ENCODE measurements at regions of chr11 and their contacts with region 1.

Region 1: DNA sequence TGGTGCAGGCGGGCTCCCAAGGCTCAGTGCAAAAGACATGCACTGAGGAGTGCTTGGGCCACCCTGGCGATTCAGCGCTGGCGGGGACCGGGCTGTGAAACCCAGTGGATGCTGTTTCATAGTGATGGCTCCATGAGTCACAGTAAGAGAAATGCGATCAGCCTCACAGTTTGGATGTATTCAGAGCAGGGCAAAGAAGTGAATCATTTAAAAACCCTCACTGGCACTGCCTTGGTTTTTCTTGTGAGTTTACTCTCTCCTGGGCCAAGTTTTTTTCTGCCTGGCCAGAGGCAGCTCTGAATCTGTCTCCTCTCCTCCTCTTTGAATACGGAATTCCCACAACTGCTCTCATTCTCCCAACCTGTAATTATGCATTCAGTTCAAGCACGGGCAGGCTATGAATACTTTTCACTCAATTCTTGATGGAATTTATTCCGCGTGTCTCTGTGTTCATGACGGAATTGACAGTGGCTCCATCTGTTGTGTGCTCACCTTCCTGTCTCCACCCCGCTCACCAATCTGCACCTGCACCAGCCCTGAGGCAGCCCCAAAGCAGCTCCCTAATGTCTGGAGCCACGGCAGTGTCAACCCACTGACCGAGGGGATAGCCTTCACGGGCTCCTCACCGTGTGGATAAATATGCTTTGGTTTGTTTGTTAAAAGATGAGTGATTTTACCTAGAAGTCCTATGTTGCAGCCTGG is 14.9 kb downstream of the ADAMTS8 start:
- DNase-seq: peak; percentile 94
- H3K4me3 ChIP-seq: no peak overlapping the region
- H3K27ac ChIP-seq: peak overlapping the region; percentile 57
- H3K4me1 ChIP-seq: peaks cover 20% of the 10 kb centered on the region
- H3K27me3 ChIP-seq: no peaks in the 10 kb centered on the region
- CTCF ChIP-seq: no peak

Region 2: GRCh38 chr11:130314750-130315285 is 98.7 kb before region 1 on chr11 and contains the start of gene ZBTB44:
- CTCF ChIA-PET with region 1: no interaction called
- dilution Hi-C with region 1: no loop called
- in situ Hi-C with region 1: no loop called
- intact Hi-C with region 1: loop called (anchors 5 kb)
- DNase-seq: peak; percentile 79
- H3K4me3 ChIP-seq: peak within 1 kb of the TSS; percentile 70 to 90 (median 81)
- H3K27ac ChIP-seq: peak within 1 kb of the TSS; percentile 46
- H3K4me1 ChIP-seq: peaks cover 29% of the 10 kb centered on the region
- H3K27me3 ChIP-seq: no peaks in the 10 kb centered on the region
- CTCF ChIP-seq: no peak
- total RNA-seq, gene ZBTB44: 27.8 to 54.3 TPM

Region 3: DNA sequence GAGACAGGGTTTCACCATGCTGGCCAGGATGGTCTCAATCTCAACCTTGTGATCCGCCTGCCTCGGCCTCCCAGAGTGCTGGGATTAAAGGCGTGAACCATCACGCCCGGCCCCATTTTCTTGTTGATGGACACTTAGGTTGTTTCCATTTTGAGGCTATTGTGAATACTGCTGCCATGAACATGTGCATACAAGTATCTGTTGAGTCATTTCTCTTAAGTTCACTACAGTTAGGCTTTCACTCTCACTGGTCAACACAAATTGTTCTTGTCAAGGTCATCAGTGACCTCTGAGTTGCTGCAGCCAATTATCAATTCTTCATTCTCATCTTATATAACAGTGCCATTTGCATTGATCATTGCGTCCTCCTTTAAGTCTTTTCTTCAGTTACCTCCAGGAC is 85.8 kb before region 1 on chr11:
- CTCF ChIA-PET with region 1: no interaction called
- dilution Hi-C with region 1: no loop called
- in situ Hi-C with region 1: no loop called
- intact Hi-C with region 1: no loop called
- DNase-seq: peak; percentile 46
- H3K4me3 ChIP-seq: no peak overlapping the region
- H3K27ac ChIP-seq: no peak overlapping the region
- H3K4me1 ChIP-seq: peaks cover 8% of the 10 kb centered on the region
- H3K27me3 ChIP-seq: no peaks in the 10 kb centered on the region
- CTCF ChIP-seq: no peak

Region 4: DNA sequence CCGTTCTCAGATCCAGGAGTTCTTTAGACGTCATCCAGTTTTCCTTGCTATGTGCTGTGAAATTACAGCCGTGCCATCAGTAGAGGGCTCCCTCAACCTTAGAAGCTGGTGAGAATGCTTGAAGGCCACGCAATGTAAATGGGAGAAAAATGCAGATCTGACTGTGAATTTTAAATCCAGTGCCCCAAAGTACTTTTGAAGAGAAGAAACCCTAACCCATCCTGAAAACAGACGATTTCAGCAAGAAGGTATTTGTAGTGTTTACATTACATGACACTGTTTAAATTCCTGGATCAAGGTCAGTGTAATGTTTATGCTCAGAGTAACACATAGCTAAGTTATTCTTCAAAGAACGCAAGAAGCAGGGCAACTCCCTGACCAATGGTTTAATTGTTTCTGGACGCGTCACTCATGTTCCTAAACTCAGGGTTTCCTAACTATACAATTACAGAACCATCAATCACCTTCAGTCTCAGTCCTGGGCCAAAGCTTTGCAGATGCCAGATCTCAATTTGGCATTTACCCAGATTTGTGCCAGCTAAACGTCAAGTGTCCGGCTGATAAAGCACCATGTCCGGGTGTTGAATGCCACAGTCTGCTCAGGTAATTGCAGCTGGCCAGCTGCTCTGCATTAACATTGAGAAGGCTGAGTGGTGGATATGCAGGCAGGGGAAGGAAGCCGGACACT is 23.3 kb before region 1 on chr11:
- CTCF ChIA-PET with region 1: no interaction called
- dilution Hi-C with region 1: no loop called
- in situ Hi-C with region 1: no loop called
- intact Hi-C with region 1: loop called (anchors 1 kb)
- DNase-seq: peak; percentile 48
- H3K4me3 ChIP-seq: no peak overlapping the region
- H3K27ac ChIP-seq: no peak overlapping the region
- H3K4me1 ChIP-seq: no peaks in the 10 kb centered on the region
- H3K27me3 ChIP-seq: peaks cover 6% of the 10 kb centered on the region
- CTCF ChIP-seq: peak; percentile 21 to 71